ENCODE measurements at regions of chr11 and their contacts with region 1.

Region 1: DNA sequence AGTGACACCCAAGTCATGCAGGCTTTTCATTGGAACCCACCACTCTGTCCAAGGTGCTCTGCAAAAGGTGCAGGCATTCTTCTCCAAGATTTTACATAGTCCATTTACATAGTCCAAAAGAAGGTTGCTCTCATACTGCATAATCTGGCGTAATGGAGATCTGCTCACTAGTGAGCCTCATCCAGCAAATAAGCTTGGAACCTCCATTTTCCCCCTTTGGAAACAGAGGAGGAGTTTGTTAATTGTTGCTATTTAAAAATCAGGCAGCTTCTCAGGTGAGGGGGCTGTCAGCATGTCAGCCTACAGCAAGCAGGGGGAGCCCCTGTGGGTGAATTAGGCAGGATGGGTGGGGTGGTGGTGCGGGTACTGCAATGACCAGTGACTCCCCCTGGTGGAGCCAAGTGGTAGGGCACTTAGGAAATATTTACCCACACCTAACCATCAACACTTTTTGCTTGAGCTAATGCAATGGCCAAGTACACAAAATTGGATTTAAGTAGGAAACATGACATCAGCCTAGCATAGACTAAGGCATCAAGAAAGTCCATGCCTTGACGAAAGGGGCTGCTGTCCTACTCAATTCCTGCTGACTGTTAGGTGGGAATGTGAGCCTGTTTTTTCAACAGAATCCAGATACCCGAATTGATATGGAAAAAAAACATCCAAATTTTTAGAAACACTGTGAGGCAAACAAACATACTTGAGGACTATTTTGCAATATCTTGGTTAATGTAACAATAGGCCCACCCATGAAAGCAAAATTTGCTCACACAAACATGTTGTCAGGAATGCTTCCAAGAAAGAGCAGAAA is 64.5 kb downstream of the AMBRA1 start:
- DNase-seq: peak; percentile 39 to 75 (median 68)
- ATAC-seq: peak; percentile 99
- H3K4me3 ChIP-seq: no peak overlapping the region
- H3K4me3 Mint-ChIP-seq: no peak overlapping the region
- H3K27ac ChIP-seq: no peak overlapping the region
- H3K27ac Mint-ChIP-seq: peak overlapping the region in 1 of 9 donors; percentile 65
- H3K4me1 ChIP-seq: peaks cover 0 to 8% of the 10 kb centered on the region in 2 donors
- H3K4me1 Mint-ChIP-seq: peaks cover 17 to 49% (median 38%) of the 10 kb centered on the region in 7 donors
- H3K27me3 ChIP-seq: no peaks in the 10 kb centered on the region
- H3K27me3 Mint-ChIP-seq: no peaks in the 10 kb centered on the region

Region 2: DNA sequence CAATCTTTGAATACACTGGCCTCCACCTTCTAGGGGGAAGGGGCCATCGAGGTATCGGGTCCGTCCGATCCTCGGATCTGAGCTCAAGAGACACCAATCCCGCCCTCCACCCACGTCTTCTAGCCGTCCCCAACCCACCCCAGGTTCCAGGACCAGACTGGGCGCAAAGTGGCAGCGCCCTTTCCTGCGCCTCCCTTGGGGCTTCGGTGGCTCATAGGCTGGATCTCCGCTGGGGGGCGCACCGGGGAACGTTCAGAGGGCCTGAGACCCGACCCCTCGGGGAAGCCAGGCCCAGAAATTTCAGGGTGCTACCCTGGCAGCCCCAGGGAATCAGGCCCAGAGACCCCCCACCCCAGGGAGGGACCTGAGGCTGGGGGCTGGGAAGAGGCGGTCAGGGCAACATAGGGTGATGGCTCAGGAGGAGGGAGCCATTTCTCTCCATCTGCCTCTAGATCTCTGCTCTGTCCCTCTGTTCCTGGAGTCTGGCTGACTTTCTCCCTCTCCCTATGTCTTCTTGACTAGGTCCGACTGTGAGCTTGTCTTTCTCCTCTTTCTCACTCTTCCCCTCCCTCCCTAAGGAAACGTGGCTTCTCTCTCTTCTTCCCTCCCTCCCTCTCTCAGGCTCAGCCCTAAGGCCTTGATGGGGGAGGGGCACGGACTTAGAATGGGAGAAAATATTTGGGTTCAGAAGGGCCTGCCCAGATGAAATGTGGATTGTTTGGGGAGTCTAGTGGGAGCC is 250.7 kb before region 1 on chr11:
- CTCF ChIA-PET with region 1: no interaction called
- POLR2A ChIA-PET with region 1: no interaction called
- intact Hi-C with region 1: no loop called
- DNase-seq: peak in 7 of 9 donors; percentile 6 to 36 (median 30)
- ATAC-seq: peak; percentile 52
- H3K4me3 ChIP-seq: no peak overlapping the region
- H3K4me3 Mint-ChIP-seq: peak overlapping the region in 6 of 10 donors; percentile 10 to 77 (median 54)
- H3K27ac ChIP-seq: no peak overlapping the region
- H3K27ac Mint-ChIP-seq: no peak overlapping the region
- H3K4me1 ChIP-seq: peaks cover 0 to 8% of the 10 kb centered on the region in 2 donors
- H3K4me1 Mint-ChIP-seq: peaks cover 0 to 31% (median 13%) of the 10 kb centered on the region in 7 donors
- H3K27me3 ChIP-seq: peaks cover 0 to 18% of the 10 kb centered on the region in 2 donors
- H3K27me3 Mint-ChIP-seq: peaks cover 28 to 63% (median 32%) of the 10 kb centered on the region in 5 donors

Region 3: DNA sequence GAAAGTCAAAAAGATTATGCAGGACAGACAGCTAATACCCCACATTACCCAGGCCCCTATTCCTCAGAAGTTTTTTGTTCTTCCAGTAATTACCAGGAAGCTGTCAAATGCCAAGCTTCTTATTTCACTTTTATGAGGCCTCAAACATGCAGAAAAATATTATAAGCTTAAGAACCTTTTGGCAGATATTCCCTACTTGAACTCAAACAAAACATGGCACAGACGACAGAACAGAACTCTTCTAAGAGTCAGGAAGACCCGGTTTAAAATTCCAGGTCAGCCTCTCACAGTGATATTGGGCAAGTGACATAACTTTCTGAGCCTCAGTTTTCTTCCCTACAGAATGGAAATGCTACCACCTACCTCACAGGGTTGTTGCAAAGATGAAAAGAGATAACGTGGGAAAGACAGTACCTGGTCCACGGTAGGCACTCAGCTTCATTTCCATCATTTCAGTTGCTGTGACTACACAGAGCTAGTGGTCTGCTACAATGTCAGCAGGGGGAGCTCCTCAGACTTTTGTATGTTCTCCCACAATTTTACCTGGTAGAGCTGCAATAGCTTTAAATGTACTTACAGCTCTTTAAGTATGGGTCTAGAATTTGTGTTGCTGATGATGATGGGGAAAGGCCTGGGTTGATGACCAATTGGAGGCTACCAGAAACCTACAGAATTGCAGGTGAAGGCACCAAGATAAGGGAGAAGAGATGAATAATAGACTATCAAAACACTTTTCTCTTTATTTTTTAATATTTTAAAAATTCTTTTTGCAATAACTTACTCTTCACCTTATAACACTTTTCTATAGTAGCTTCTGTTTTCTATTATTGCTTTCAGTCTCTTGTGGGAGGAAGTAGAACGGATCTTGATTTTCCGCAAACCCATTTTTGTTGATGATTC is 39.4 kb before region 1 on chr11:
- CTCF ChIA-PET with region 1: interaction called, 6 read pairs
- POLR2A ChIA-PET with region 1: interaction called, 4 read pairs
- intact Hi-C with region 1: loop called in 1 of 2 experiments (anchors 2 kb)
- DNase-seq: peak in 7 of 9 donors; percentile 10 to 48 (median 27)
- ATAC-seq: peak; percentile 73
- H3K4me3 ChIP-seq: no peak overlapping the region
- H3K4me3 Mint-ChIP-seq: no peak overlapping the region
- H3K27ac ChIP-seq: no peak overlapping the region
- H3K27ac Mint-ChIP-seq: peak overlapping the region in 2 of 9 donors; percentile 32 to 66
- H3K4me1 ChIP-seq: no peaks in the 10 kb centered on the region
- H3K4me1 Mint-ChIP-seq: peaks cover 0 to 21% (median 8%) of the 10 kb centered on the region in 7 donors
- H3K27me3 ChIP-seq: no peaks in the 10 kb centered on the region
- H3K27me3 Mint-ChIP-seq: no peaks in the 10 kb centered on the region

Region 4: GRCh38 chr11:46948378-46949131 is 419.3 kb after region 1 on chr11:
- CTCF ChIA-PET with region 1: no interaction called
- POLR2A ChIA-PET with region 1: no interaction called
- intact Hi-C with region 1: no loop called
- DNase-seq: no peak
- ATAC-seq: no peak
- H3K4me3 ChIP-seq: no peak overlapping the region
- H3K4me3 Mint-ChIP-seq: no peak overlapping the region
- H3K27ac ChIP-seq: no peak overlapping the region
- H3K27ac Mint-ChIP-seq: no peak overlapping the region
- H3K4me1 ChIP-seq: no peaks in the 10 kb centered on the region
- H3K4me1 Mint-ChIP-seq: peaks cover 6 to 16% (median 11%) of the 10 kb centered on the region in 7 donors
- H3K27me3 ChIP-seq: no peaks in the 10 kb centered on the region
- H3K27me3 Mint-ChIP-seq: no peaks in the 10 kb centered on the region